ENCODE measurements at regions of chr14 and their contacts with region 1.

Region 1: GRCh38 chr14:60724137-60724619 is at the start of gene SIX4:
- DNase-seq: peak; percentile 89 to 93
- H3K4me3 ChIP-seq: peak within 1 kb of the TSS; percentile 78
- H3K27ac ChIP-seq: peak within 1 kb of the TSS; percentile 80
- H3K4me1 ChIP-seq: peaks cover 26% of the 10 kb centered on the region
- H3K27me3 ChIP-seq: no peaks in the 10 kb centered on the region
- CTCF ChIP-seq: no peak
- total RNA-seq, gene SIX4: 31.0 and 35.7 TPM in 2 replicates

Region 2: DNA sequence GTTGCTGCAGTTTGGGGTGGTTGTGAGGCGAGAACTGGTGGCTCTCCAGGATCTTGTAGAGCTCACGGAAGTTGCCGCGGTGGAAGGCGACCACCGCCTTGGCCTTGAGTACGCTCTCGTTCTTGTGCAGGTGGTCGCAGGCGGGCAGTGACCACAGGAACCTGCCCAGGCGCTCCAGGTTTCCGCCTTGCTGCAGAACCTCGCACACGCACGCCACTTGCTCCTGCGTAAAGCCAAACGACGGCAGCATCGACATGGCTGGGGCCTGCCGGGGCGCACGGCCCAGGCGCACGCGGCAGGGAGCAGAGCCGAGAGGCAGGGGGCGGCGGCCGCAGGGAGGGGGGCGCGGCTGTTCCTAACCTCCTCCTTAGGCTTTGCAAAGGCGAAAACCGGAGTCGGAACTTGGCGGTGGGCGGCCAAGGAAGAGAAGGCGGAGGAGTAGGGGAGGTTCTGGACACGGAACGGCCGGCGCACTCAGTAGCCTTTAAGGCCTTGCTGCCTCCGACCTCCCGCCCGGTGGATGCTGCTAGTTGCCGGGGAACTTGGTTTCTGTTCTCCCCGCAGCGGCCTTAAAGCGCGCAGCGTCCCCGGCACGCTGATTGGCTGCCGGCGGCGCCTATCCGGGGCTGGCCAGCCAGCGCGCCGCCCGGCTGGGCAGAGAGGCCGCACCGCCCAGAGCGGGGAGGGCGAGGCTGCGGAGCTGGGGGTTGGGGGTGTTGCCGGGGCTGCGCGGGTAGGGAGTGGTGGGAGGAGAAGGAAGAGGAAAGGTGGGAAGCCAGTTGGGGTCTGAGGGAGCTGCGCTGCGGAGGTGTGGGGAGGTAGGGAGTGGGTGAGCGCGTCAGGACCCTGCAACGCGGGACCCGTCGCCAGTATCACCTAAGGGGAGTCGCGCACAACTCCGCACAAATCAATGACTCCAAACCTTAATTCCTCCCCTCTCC is 75.0 kb before region 1 on chr14 and contains the start of gene SIX1:
- CTCF ChIA-PET with region 1: no interaction called
- POLR2A ChIA-PET with region 1: no interaction called
- intact Hi-C with region 1: loop called (anchors 2 kb)
- DNase-seq: peak; percentile 82 to 90
- H3K4me3 ChIP-seq: peak within 1 kb of the TSS; percentile 88
- H3K27ac ChIP-seq: 0 out of 2 replicates have a peak within 1 kb of the TSS, but pooled peaks have one; percentile 28
- H3K4me1 ChIP-seq: peaks cover 19% of the 10 kb centered on the region
- H3K27me3 ChIP-seq: no peaks in the 10 kb centered on the region
- CTCF ChIP-seq: no peak
- total RNA-seq, gene SIX1: 8.1 and 9.4 TPM in 2 replicates

Region 3: GRCh38 chr14:60753264-60754119 is 29.3 kb after region 1 on chr14:
- CTCF ChIA-PET with region 1: no interaction called
- POLR2A ChIA-PET with region 1: no interaction called
- intact Hi-C with region 1: no loop called
- DNase-seq: no peak
- H3K4me3 ChIP-seq: no peak overlapping the region
- H3K27ac ChIP-seq: no peak overlapping the region
- H3K4me1 ChIP-seq: peaks cover 26% of the 10 kb centered on the region
- H3K27me3 ChIP-seq: no peaks in the 10 kb centered on the region
- CTCF ChIP-seq: no peak

Region 4: DNA sequence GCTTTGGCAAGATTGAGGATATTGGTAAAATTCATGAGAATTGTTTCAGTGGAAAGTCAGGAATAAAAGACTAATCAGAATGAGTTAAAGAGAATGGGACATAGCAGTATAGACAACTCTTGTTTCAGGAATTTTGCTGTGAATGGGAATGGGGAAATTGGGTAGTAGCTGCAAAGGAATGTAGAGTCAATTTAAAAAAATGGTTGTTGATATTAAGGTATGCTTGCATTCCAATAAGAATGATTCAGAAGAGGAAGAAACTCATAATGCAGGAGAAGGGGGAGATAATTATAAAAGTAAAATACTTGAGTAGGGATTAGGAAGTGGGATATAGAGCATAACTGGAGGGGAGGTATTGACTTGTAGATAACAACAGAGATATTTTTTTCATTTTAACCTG is 51.1 kb after region 1 on chr14:
- CTCF ChIA-PET with region 1: interaction called, 6 read pairs
- POLR2A ChIA-PET with region 1: no interaction called
- intact Hi-C with region 1: loop called (anchors 2 kb)
- DNase-seq: peak; percentile 5 to 94
- H3K4me3 ChIP-seq: no peak overlapping the region
- H3K27ac ChIP-seq: peak overlapping the region; percentile 71
- H3K4me1 ChIP-seq: peaks cover 30% of the 10 kb centered on the region
- H3K27me3 ChIP-seq: no peaks in the 10 kb centered on the region
- CTCF ChIP-seq: no peak

Region 5: GRCh38 chr14:60845523-60845922 is 121.3 kb after region 1 on chr14:
- CTCF ChIA-PET with region 1: no interaction called
- POLR2A ChIA-PET with region 1: no interaction called
- intact Hi-C with region 1: no loop called
- DNase-seq: no peak
- H3K4me3 ChIP-seq: no peak overlapping the region
- H3K27ac ChIP-seq: no peak overlapping the region
- H3K4me1 ChIP-seq: no peaks in the 10 kb centered on the region
- H3K27me3 ChIP-seq: no peaks in the 10 kb centered on the region
- CTCF ChIP-seq: no peak

Region 6: DNA sequence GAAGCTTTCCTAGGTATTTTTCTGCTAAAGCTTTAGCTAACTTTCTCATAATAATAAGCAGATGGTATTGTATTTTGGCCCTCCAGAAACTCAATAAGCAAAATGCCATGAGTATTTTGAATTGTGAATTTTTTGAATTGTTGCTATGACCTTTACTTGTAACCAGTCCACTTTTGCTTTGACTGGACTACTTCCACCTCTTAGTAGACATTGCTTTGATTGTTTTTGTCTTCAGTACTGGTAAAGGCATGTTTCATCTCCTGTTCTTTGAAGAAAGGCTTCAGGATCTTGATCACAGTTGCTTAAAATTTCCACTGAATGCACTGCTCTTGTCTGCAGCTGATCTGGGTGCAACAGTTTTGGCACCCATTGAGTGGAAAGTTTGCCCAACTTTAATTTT is 154.4 kb after region 1 on chr14:
- CTCF ChIA-PET with region 1: no interaction called
- POLR2A ChIA-PET with region 1: no interaction called
- intact Hi-C with region 1: no loop called
- DNase-seq: no peak
- H3K4me3 ChIP-seq: no peak overlapping the region
- H3K27ac ChIP-seq: no peak overlapping the region
- H3K4me1 ChIP-seq: no peaks in the 10 kb centered on the region
- H3K27me3 ChIP-seq: no peaks in the 10 kb centered on the region
- CTCF ChIP-seq: no peak

Region 7: GRCh38 chr14:60965402-60965801 is 241.2 kb after region 1 on chr14:
- CTCF ChIA-PET with region 1: no interaction called
- POLR2A ChIA-PET with region 1: interaction called, 11 read pairs
- intact Hi-C with region 1: no loop called
- DNase-seq: no peak
- H3K4me3 ChIP-seq: no peak overlapping the region
- H3K27ac ChIP-seq: no peak overlapping the region
- H3K4me1 ChIP-seq: no peaks in the 10 kb centered on the region
- H3K27me3 ChIP-seq: no peaks in the 10 kb centered on the region
- CTCF ChIP-seq: no peak

Region 8: GRCh38 chr14:61103481-61104339 is 379.5 kb after region 1 on chr14:
- CTCF ChIA-PET with region 1: interaction called, 10 read pairs
- POLR2A ChIA-PET with region 1: no interaction called
- intact Hi-C with region 1: no loop called
- DNase-seq: peak; percentile 85 to 89
- H3K4me3 ChIP-seq: 0 out of 2 replicates have a peak overlapping the region, but pooled peaks have one; percentile 1
- H3K27ac ChIP-seq: peak overlapping the region; percentile 98
- H3K4me1 ChIP-seq: peaks cover 37% of the 10 kb centered on the region
- H3K27me3 ChIP-seq: no peaks in the 10 kb centered on the region
- CTCF ChIP-seq: no peak

Region 9: DNA sequence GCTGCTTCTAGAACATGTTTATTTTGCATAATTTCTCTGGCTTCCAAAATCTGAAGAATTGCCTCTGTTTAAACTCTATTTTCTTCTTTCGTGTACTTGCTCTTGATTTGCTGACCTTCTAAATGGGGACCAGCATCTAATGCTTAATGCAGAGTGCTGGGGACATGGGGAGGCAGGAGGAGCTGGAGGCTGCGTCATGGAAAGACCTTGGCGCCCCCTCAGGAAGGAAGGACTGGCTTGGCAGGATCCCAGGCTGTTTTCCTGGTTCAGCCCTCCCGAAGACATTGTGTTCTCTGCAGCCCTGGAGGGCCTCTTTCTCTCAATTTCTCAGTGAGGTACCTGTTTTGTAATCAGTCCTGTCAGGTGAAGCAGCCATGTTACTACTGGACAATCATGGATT is 602.7 kb after region 1 on chr14:
- CTCF ChIA-PET with region 1: no interaction called
- POLR2A ChIA-PET with region 1: interaction called, 21 read pairs
- intact Hi-C with region 1: no loop called
- DNase-seq: peak in 1 of 2 experiments; percentile 12
- H3K4me3 ChIP-seq: no peak overlapping the region
- H3K27ac ChIP-seq: no peak overlapping the region; the same call in 1 of the 2 replicates
- H3K4me1 ChIP-seq: peaks cover 35% of the 10 kb centered on the region
- H3K27me3 ChIP-seq: no peaks in the 10 kb centered on the region
- CTCF ChIP-seq: no peak